ENCODE measurements at regions of chr10 and their contacts with region 1.

Region 1: DNA sequence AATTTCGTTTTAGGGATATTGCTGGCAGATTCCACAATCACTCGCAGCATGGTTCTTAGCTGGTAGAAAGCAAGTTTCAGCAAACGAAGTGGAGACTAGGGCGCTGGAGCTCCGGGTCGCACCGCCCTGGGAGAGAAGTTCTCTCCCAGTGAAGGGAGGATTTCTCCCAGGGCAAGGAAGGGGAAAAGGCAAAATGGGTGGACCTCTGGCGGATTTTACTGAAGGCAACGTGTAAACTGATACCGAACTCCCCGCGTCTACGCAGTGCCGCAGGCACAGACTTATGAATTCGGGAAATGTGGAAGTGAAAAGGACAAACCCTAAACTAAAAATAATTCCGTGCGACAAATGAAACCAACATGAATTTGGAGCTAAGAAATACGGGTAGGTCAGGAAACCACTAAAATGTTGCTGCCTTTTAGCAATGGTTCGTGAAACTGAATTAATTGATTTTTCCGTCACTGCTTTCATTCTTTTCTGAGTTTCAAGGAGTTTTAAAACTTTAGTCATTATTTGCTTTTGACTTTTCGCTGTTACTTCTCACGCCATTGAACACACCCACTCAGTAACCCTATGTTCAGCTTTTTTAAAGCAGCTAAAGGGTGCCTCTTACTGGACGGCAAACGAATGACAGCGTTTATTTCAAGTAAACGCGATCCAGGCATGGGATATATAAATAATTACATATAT is at the start of gene MYOF:
- DNase-seq: peak; percentile 91
- H3K4me3 ChIP-seq: peak within 1 kb of the TSS; percentile 72
- H3K27me3 ChIP-seq: no peaks in the 10 kb centered on the region
- CTCF ChIP-seq: peak; percentile 54
- polyA plus RNA-seq, gene MYOF: 355 and 425 TPM in 2 replicates

Region 2: GRCh38 chr10:93352638-93353383 is 129.5 kb before region 1 on chr10:
- CTCF ChIA-PET with region 1: interaction called, 12 read pairs
- POLR2A ChIA-PET with region 1: no interaction called
- DNase-seq: no peak
- H3K4me3 ChIP-seq: no peak overlapping the region
- H3K27me3 ChIP-seq: no peaks in the 10 kb centered on the region
- CTCF ChIP-seq: peak; percentile 55

Region 3: DNA sequence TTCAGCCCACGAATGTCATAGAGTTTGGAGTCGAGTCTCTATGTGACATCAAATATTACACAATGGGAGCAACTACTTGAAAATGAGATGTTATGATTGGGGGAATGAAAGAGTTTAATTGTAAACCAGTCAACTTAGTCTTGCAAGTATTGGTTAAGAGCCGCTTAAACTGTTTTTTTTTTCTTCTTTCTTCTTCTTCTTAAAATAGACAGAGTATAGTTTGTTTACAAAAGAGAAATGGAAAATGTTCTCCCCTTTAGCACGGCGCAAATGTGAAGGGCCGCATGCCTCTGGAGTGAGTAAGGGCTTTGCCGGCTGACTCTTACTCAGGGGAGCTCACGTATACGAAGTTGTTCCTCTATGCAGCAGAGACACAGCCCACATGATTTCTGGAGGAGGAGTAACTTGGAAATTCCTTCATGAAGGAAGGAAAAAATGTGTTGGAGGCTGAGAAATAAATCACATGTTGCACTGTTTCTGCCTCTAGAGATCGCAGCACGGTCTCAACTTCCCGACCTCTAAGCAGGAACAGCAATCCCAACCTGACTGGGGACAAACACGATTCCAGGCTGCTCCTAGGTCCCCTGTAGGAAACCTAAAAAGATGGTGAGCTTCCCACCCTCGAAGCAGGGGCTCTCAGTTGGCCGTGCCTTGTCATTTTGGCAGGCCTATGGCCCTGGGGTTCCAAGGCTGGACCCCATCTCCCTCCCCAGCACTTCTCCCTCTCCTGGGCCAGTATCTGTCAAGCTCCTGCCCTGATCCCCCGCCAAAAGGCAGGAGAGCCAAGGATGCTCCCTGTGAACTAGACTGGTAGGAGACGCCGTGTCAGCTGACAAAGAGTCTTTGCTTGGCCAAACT is 45.0 kb before region 1 on chr10:
- CTCF ChIA-PET with region 1: interaction called, 22 read pairs
- POLR2A ChIA-PET with region 1: interaction called, 4 read pairs
- DNase-seq: peak; percentile 99
- H3K4me3 ChIP-seq: no peak overlapping the region
- H3K27me3 ChIP-seq: no peaks in the 10 kb centered on the region
- CTCF ChIP-seq: no peak

Region 4: GRCh38 chr10:93463678-93464476 is 18.4 kb before region 1 on chr10:
- CTCF ChIA-PET with region 1: interaction called, 20 read pairs
- POLR2A ChIA-PET with region 1: interaction called, 4 read pairs
- DNase-seq: no peak
- H3K4me3 ChIP-seq: no peak overlapping the region
- H3K27me3 ChIP-seq: no peaks in the 10 kb centered on the region
- CTCF ChIP-seq: no peak

Region 5: GRCh38 chr10:93503075-93503474 is 20.8 kb after region 1 on chr10:
- CTCF ChIA-PET with region 1: no interaction called
- POLR2A ChIA-PET with region 1: no interaction called
- DNase-seq: no peak
- H3K4me3 ChIP-seq: no peak overlapping the region
- H3K27me3 ChIP-seq: no peaks in the 10 kb centered on the region
- CTCF ChIP-seq: no peak

Region 6: GRCh38 chr10:93515071-93516005 is 33.0 kb after region 1 on chr10:
- CTCF ChIA-PET with region 1: interaction called, 12 read pairs
- POLR2A ChIA-PET with region 1: no interaction called
- DNase-seq: no peak
- H3K4me3 ChIP-seq: no peak overlapping the region
- H3K27me3 ChIP-seq: no peaks in the 10 kb centered on the region
- CTCF ChIP-seq: no peak

Region 7: GRCh38 chr10:93600446-93601145 is 118.3 kb after region 1 on chr10:
- CTCF ChIA-PET with region 1: no interaction called
- POLR2A ChIA-PET with region 1: no interaction called
- DNase-seq: no peak
- H3K4me3 ChIP-seq: peak overlapping the region; percentile 13; the same call in 1 of the 2 replicates
- H3K27me3 ChIP-seq: peaks cover 15% of the 10 kb centered on the region
- CTCF ChIP-seq: no peak